SK-N-SH (cell line): ENCODE measurements at regions of chr2 and their contacts with region 1.

Region 1: DNA sequence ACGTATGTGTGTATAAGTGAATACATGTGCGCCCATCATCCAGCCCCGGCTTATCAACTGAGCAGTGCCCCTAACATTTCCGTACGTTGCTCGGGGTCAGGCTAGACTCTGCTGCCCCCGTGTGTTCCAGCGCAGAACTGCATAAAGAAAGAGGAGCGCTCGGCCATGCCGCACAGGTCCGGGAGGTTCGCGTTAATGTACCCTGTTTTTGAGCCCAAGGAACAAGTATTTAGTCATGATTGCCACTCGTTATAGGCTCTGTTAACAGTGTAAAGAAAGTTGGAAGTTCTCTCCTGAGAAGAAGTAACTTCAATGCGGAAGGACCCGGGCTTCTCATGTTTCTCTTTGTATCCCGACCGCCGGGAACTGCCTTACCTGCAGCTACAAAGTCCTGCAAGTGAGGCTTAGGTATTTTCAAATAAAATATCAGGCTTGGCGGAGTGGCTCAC is 55.7 kb downstream of the CD8B2 start:
- DNase-seq: peak; percentile 88
- H3K4me3 ChIP-seq: peak overlapping the region; percentile 27 to 47; a peak in 2 of 4 replicates
- H3K27ac ChIP-seq: no peak overlapping the region
- H3K4me1 ChIP-seq: peaks cover 0 to 5% of the 10 kb centered on the region in 2 experiments; a peak in 1 of 4 replicates
- H3K27me3 ChIP-seq: no peaks in the 10 kb centered on the region
- CTCF ChIP-seq: peak; percentile 88
- EP300 ChIP-seq: no peak
- RAD21 ChIP-seq: peak; percentile 87

Region 2: DNA sequence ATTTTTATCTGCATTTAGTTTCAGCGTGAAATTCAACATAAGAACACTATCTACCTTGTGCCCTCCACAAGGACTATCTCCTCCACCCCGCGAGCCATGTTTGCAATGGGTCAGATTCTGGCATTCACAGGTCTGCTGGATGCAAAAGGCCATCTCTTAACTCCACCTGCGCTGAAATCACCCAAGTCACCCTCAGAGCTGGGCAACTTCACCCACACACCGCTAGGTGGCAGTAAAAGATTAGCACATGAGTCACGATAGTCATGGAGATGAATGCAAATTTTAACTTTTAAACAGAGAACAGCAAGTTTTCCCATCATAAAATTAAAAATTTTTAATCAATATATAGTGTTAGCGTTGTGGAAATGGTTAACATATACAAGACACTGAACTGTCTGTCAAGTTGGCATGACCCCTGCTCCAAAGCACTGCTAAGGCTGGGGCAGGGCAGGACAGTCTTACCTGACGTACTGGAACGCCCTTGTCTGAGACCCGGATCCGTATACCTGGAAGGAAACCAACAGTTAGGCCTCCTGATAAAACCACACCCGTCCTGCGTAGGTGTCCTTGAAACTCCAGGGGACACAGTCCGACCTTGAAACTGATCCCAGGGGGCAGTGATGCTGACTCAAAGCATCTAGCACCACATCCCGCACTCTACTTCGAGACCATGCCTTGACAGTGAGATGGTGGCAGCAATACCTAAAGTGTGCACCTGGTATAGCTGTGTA is 438.3 kb before region 1 on chr2:
- CTCF ChIA-PET with region 1: interaction called, 46 read pairs
- POLR2A ChIA-PET with region 1: no interaction called
- DNase-seq: peak; percentile 81
- H3K4me3 ChIP-seq: no peak overlapping the region; a peak in 1 of 4 replicates
- H3K27ac ChIP-seq: no peak overlapping the region
- H3K4me1 ChIP-seq: peaks cover 4 to 7% of the 10 kb centered on the region in 2 experiments; a peak in 2 of 4 replicates
- H3K27me3 ChIP-seq: no peaks in the 10 kb centered on the region
- CTCF ChIP-seq: peak; percentile 98
- EP300 ChIP-seq: no peak
- RAD21 ChIP-seq: peak; percentile 96

Region 3: GRCh38 chr2:106566050-106566449 is 23.2 kb after region 1 on chr2:
- CTCF ChIA-PET with region 1: interaction called, 26 read pairs
- POLR2A ChIA-PET with region 1: no interaction called
- DNase-seq: no peak
- H3K4me3 ChIP-seq: no peak overlapping the region
- H3K27ac ChIP-seq: no peak overlapping the region
- H3K4me1 ChIP-seq: peaks cover 0 to 28% of the 10 kb centered on the region in 2 experiments; a peak in 2 of 4 replicates
- H3K27me3 ChIP-seq: no peaks in the 10 kb centered on the region
- CTCF ChIP-seq: no peak
- EP300 ChIP-seq: no peak
- RAD21 ChIP-seq: no peak

Region 4: GRCh38 chr2:106572541-106573450 is 30.0 kb after region 1 on chr2:
- CTCF ChIA-PET with region 1: interaction called, 10 read pairs
- POLR2A ChIA-PET with region 1: no interaction called
- DNase-seq: no peak
- H3K4me3 ChIP-seq: peak overlapping the region in 1 of 2 experiments; percentile 52; a peak in 1 of 4 replicates
- H3K27ac ChIP-seq: no peak overlapping the region
- H3K4me1 ChIP-seq: peaks cover 0 to 12% of the 10 kb centered on the region in 2 experiments; a peak in 2 of 4 replicates
- H3K27me3 ChIP-seq: no peaks in the 10 kb centered on the region
- CTCF ChIP-seq: peak; percentile 57
- EP300 ChIP-seq: no peak
- RAD21 ChIP-seq: peak; percentile 45; the same call in 1 of the 2 replicates

Region 5: GRCh38 chr2:106614511-106615291 is 71.9 kb after region 1 on chr2:
- CTCF ChIA-PET with region 1: no interaction called
- POLR2A ChIA-PET with region 1: no interaction called
- DNase-seq: no peak
- H3K4me3 ChIP-seq: no peak overlapping the region
- H3K27ac ChIP-seq: no peak overlapping the region
- H3K4me1 ChIP-seq: peaks cover 0 to 5% of the 10 kb centered on the region in 2 experiments; a peak in 1 of 4 replicates
- H3K27me3 ChIP-seq: no peaks in the 10 kb centered on the region
- CTCF ChIP-seq: no peak
- EP300 ChIP-seq: no peak
- RAD21 ChIP-seq: no peak